ENCODE measurements at regions of chr7 and their contacts with region 1.

Region 1: DNA sequence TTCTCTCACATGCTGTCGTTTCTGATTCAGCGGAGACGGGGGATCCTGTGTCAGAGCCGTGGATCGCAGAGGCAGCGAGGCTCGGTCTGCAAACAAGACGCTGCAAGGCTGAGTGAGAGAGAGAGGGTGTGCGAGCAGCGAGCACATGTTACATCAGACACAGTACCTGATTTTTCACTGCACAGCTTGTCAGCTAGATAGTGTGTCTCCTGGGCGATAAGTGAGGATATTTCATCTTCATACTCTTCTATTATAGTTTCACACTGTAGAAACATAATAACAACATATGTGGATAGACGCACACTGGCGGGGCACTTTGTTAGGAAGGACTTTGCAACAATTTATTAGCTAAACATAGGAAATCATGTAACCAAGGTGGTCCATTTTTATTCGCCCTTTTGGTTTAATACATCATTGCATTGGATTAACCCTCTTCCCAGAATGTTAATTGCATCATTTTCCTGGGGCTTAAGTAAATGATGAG is 39.5 kb downstream of the CNPY1 start:
- DNase-seq: no peak
- H3K4me3 Mint-ChIP-seq: no peak overlapping the region
- H3K27ac Mint-ChIP-seq: peak overlapping the region; percentile 53
- H3K4me1 Mint-ChIP-seq: peaks cover 15% of the 10 kb centered on the region
- H3K27me3 Mint-ChIP-seq: peaks cover 88% of the 10 kb centered on the region

Region 2: DNA sequence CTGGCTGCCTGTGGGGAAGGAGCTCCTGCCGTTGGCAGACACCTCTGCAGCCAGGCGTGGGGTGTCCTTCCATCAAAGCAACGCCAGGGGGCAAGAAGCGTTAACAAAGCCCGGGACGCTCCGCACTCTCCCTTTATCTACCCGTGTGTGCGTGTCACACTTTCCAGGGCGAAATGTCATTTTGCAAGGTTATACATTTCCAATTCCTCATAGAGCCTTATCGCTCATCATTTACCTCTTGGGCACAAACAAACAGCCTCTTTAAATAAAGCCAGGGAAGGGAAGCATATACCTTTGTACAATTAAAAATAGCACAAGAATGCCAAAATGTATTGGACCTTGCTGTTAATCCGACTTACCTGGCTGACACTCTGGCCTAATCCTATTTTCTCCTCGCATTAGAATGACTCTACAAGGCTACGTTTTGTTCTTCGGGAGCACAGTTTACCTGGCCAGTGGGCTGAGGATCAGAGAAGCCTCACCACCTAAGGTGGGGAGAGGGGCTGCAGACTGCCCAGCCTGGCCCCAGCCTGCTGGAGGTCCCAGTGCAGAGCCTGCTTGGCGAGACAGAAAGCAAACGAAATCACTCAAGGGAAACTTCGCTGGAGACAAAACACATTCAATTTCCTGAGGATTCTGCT is 126.6 kb before region 1 on chr7:
- intact Hi-C with region 1: loop called (anchors 2 kb)
- DNase-seq: peak; percentile 88
- H3K4me3 Mint-ChIP-seq: no peak overlapping the region
- H3K27ac Mint-ChIP-seq: no peak overlapping the region
- H3K4me1 Mint-ChIP-seq: peaks cover 18% of the 10 kb centered on the region
- H3K27me3 Mint-ChIP-seq: peaks cover 75% of the 10 kb centered on the region

Region 3: GRCh38 chr7:155456738-155457564 is 49.9 kb before region 1 on chr7:
- intact Hi-C with region 1: loop called (anchors 2 kb)
- DNase-seq: no peak
- H3K4me3 Mint-ChIP-seq: peak overlapping the region; percentile 64
- H3K27ac Mint-ChIP-seq: peak overlapping the region; percentile 79
- H3K4me1 Mint-ChIP-seq: peaks cover 9% of the 10 kb centered on the region
- H3K27me3 Mint-ChIP-seq: peaks cover 72% of the 10 kb centered on the region

Region 4: GRCh38 chr7:155533827-155534690 is 27.2 kb after region 1 on chr7:
- intact Hi-C with region 1: loop called (anchors 2 kb)
- DNase-seq: peak; percentile 72
- H3K4me3 Mint-ChIP-seq: no peak overlapping the region
- H3K27ac Mint-ChIP-seq: no peak overlapping the region
- H3K4me1 Mint-ChIP-seq: peaks cover 7% of the 10 kb centered on the region
- H3K27me3 Mint-ChIP-seq: peaks cover 69% of the 10 kb centered on the region

Region 5: DNA sequence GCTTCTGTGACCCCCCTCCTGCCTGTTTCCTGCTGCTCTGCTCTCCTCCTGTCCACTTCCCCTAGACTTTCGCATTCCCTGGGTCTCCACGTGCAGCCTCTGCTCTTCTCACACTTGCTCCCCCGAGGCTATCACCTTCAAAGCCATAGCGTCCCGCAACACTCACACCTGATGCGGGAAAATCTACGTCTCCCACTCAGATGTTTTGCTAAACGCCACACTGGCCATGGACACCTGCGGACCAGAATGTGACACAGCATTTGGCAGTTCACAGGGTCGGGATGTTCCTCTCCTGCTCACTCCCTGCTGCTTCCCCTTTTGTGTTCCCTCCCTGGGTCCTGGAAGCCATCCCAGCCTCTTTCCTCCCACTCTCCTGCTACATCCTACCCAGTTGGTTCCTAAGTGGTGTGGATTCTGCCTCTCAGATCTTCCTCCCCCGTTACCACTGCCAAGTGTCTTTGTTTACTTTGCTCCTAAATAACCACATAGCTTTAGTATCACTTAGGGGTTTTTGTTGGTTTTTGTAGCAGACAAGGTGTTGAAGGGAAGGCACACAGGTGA is 103.8 kb after region 1 on chr7:
- intact Hi-C with region 1: no loop called
- DNase-seq: no peak
- H3K4me3 Mint-ChIP-seq: no peak overlapping the region
- H3K27ac Mint-ChIP-seq: no peak overlapping the region
- H3K4me1 Mint-ChIP-seq: no peaks in the 10 kb centered on the region
- H3K27me3 Mint-ChIP-seq: peaks cover 6% of the 10 kb centered on the region

Region 6: DNA sequence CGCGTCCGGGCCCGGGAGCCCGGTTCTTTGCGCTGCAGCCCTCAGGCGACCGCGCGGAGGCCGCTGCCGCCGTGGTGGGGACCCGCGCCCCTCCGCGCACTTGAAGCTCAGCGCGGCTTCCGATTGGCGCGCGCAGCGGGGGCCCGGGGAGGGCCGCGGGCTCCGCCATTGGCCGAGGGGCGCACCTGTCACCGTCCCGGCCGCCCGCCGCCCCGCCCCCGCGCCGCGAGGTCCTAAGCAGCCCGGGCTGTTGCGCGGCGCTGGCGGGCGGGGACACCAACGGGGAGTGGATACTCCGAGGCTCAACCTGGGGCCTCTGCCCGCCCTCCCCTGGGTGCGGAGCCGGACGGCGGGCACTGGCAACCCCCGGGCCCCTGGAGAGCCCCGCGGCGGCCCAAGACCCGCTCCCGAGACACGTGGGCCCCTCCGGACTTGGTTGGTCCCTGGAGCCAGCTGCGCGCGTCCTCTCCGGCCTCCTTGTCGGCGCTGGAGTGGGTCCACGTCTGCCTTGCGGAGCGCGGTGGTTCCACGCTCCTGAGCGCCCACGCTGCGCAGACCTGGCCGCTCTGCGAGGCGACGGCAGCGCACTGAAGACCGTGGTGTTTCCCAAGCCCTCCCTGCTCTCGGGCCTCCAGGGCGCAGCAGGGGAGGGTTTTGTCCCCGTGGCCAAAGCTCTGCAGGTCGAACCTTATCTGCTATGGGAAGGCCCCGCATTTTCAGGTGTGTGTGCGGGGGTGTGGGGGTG is 1503.9 kb after region 1 on chr7 and contains the start of gene MNX1:
- intact Hi-C with region 1: loop called (anchors 2 kb)
- DNase-seq: peak; percentile 83
- H3K4me3 Mint-ChIP-seq: peak within 1 kb of the TSS; percentile 67
- H3K27ac Mint-ChIP-seq: peak within 1 kb of the TSS; percentile 48
- H3K4me1 Mint-ChIP-seq: peaks cover 8% of the 10 kb centered on the region
- H3K27me3 Mint-ChIP-seq: peaks cover 74% of the 10 kb centered on the region
- total RNA-seq, gene MNX1: not detected in 2 replicates

Measured in activated CD4-positive, alpha-beta T cell treated with anti-CD3 and anti-CD28 coated beads, Interleukin-2, amount 10 ng/mL, durations not matched to agents 24 days and 14 days (primary cell).